ENCODE measurements at regions of chr3 and their contacts with region 1.

Region 1: GRCh38 chr3:45499529-45499928 is 95.0 kb upstream of the LIMD1 start:
- ATAC-seq: peak in 3 of 8 experiments; percentile 33 to 49 (median 39)
- H3K4me3 ChIP-seq: no peak overlapping the region
- H3K27ac ChIP-seq: no peak overlapping the region
- H3K4me1 ChIP-seq: peaks cover 0 to 9% of the 10 kb centered on the region in 2 donors

Region 2: GRCh38 chr3:45224824-45225464 is 274.6 kb before region 1 on chr3:
- in situ Hi-C with region 1: loop called in 2 of 9 experiments (anchors 10 to 25 kb)
- ATAC-seq: peak; percentile 74 to 85 (median 79)
- H3K4me3 ChIP-seq: peak overlapping the region; percentile 51 to 94 (median 57)
- H3K27ac ChIP-seq: no peak overlapping the region
- H3K4me1 ChIP-seq: peaks cover 13 to 22% of the 10 kb centered on the region in 2 donors

Region 3: GRCh38 chr3:45409921-45410320 is 89.6 kb before region 1 on chr3:
- in situ Hi-C with region 1: loop called in 1 of 9 experiments (anchors 10 kb)
- ATAC-seq: peak in 2 of 8 experiments; percentile 21 to 33
- H3K4me3 ChIP-seq: no peak overlapping the region
- H3K27ac ChIP-seq: no peak overlapping the region
- H3K4me1 ChIP-seq: no peaks in the 10 kb centered on the region

Measured in motor neuron (in vitro differentiated cells).